ENCODE measurements at regions of chr1 and their contacts with region 1.

Region 1: DNA sequence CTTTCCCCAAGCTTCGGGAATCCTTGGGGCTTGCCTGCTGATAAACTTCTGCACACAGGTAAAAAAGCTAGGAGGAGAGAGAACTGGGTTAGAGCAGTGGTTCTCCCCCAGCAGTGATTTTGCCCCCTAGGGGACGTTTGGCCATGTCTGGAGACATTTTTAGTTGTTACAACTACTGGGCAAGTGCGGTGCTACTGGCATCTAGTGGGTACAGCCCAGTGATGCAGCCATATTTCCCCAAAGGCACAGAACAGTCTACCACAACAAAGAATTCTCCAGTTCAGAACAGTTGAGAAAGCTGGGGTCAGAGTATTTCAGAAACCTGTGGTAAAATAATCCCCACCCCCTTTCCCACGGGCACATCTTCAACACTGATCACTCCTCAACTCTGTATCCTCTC is 41.3 kb downstream of the LRRC71 start:
- DNase-seq: peak in 1 of 2 experiments; percentile 37
- H3K4me3 ChIP-seq: no peak overlapping the region
- H3K27ac ChIP-seq: no peak overlapping the region
- H3K4me1 ChIP-seq: peaks cover 41% of the 10 kb centered on the region
- H3K27me3 ChIP-seq: no peaks in the 10 kb centered on the region
- CTCF ChIP-seq: peak; percentile 53

Region 2: DNA sequence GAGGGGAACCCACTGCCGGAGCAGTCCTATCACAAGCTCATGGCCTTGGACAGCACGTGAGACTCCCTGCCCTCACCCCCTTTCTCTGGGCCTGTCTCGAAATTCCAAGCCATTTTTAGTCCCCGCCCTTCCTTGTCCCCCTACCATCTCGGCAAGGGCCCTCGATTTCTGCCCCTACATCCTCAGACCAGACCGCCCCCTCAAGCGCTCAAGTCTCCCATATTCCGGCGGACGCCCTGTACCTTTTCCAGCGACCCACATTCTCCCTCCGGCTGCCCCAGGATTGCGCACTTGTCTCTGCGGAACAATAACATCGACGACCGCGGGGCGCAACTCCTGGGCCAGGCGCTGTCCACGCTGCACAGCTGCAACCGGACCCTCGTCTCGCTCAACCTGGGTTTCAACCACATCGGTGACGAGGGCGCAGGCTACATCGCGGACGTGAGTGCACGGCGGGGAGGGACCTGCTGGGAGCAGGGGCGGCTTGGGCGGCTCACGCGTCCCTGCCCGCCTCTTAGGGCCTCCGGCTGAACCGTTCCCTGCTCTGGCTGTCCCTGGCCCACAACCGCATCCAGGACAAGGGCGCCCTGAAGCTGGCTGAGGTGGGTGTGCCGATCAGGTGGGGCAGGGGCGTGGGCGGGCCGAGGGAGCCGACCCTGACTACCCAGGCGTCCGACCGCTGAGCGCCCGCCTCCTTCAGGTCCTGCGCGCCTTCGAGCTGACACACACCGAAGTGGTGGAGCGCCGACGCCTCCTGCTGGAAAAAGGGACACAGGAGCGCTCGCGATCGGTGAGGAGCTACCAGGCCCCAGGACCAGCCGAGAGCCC is 34.3 kb before region 1 on chr1:
- CTCF ChIA-PET with region 1: no interaction called
- POLR2A ChIA-PET with region 1: no interaction called
- intact Hi-C with region 1: loop called (anchors 2 kb)
- DNase-seq: peak; percentile 68 to 79
- H3K4me3 ChIP-seq: peak overlapping the region; percentile 64
- H3K27ac ChIP-seq: no peak overlapping the region
- H3K4me1 ChIP-seq: peaks cover 30% of the 10 kb centered on the region
- H3K27me3 ChIP-seq: no peaks in the 10 kb centered on the region
- CTCF ChIP-seq: peak; percentile 77

Region 3: GRCh38 chr1:157000686-157001085 is 39.0 kb after region 1 on chr1:
- CTCF ChIA-PET with region 1: no interaction called
- POLR2A ChIA-PET with region 1: no interaction called
- intact Hi-C with region 1: loop called (anchors 5 kb)
- DNase-seq: peak; percentile 45 to 76
- H3K4me3 ChIP-seq: no peak overlapping the region
- H3K27ac ChIP-seq: no peak overlapping the region
- H3K4me1 ChIP-seq: peaks cover 13% of the 10 kb centered on the region; the same call in 1 of the 2 replicates
- H3K27me3 ChIP-seq: no peaks in the 10 kb centered on the region
- CTCF ChIP-seq: no peak

Region 4: GRCh38 chr1:157045251-157046218 is 83.8 kb after region 1 on chr1 and contains the start of gene ARHGEF11:
- CTCF ChIA-PET with region 1: no interaction called
- POLR2A ChIA-PET with region 1: no interaction called
- intact Hi-C with region 1: loop called (anchors 10 kb)
- DNase-seq: peak; percentile 57 to 94
- H3K4me3 ChIP-seq: peak within 1 kb of the TSS; percentile 70
- H3K27ac ChIP-seq: peak within 1 kb of the TSS; percentile 42; the same call in 1 of the 2 replicates
- H3K4me1 ChIP-seq: peaks cover 37% of the 10 kb centered on the region
- H3K27me3 ChIP-seq: no peaks in the 10 kb centered on the region
- CTCF ChIP-seq: no peak
- total RNA-seq, gene ARHGEF11: 25.2 and 31.5 TPM in 2 replicates

Region 5: DNA sequence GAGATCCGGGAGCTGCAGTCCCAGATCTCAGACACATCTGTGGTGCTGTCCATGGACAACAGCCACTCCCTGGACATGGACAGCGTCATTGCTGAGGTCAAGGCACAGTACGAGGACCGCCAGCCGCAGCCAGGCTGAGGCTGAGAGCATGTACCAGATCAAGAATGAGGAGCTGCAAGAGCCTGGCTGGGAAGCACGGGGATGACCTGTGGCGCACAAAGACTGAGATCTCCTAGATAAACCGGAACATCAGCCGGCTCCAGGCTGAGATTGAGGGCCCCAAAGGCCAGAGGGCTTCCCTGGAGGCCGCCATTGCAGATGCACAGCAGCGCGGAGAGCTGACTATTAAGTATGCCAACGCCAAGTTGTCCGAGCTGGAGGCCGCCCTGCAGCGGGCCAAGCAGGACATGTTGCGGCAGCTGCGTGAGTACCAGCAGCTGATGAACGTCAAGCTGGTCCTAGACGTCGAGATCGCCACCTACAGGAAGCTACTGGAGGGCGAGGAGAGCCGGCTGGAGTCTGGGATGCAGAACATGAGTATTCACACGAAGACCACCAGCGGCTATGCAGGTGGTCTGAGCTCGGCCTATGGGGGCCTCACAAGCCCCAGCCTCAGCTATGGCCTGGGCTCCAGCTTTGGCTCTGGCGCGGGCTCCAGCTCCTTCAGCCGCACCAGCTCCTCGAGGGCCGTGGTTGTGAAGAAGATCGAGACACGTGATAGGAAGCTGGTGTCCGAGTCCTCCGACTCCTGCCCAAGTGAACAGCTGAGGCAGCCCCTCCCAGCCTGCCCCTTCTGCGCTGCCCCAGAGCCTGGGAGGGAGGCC is 112.4 kb after region 1 on chr1:
- CTCF ChIA-PET with region 1: interaction called, 4 read pairs
- POLR2A ChIA-PET with region 1: no interaction called
- intact Hi-C with region 1: loop called (anchors 10 kb)
- DNase-seq: peak in 1 of 2 experiments; percentile 54
- H3K4me3 ChIP-seq: no peak overlapping the region
- H3K27ac ChIP-seq: no peak overlapping the region
- H3K4me1 ChIP-seq: no peaks in the 10 kb centered on the region
- H3K27me3 ChIP-seq: peaks cover 3% of the 10 kb centered on the region; the same call in 1 of the 2 replicates
- CTCF ChIP-seq: peak; percentile 57

Measured in PC-9 (cell line).